Esophagus muscularis mucosa (tissue), 4 donors: ENCODE measurements at regions of chr4 and their contacts with region 1.

Region 1: DNA sequence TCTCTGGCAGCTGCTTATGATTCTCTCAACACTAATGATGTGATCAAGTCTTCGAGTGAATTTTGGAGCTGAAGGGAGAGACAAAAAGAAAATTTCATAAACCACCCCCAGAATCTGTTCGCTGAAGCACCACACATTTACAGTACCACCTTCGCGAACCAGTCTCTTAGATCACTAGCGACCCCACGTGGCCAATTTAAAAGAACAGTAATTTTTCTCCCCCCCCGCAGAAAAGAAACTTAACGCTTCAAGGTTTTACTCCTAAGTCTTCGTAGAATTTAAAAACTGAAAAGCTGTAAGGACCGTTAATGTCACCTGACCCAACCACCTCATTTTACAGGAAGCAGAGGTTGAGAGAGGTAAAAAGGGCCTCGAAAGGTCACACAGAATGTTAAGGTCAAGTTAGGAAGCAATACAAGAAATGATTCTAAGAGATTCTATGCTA is 187.5 kb downstream of the QDPR start:
- DNase-seq: no peak
- H3K4me3 ChIP-seq: no peak overlapping the region
- H3K27ac ChIP-seq: no peak overlapping the region
- H3K4me1 ChIP-seq: peaks cover 8 to 21% (median 14%) of the 10 kb centered on the region in 4 donors
- H3K27me3 ChIP-seq: no peaks in the 10 kb centered on the region
- CTCF ChIP-seq: peak; percentile 66 to 71 (median 68)
- EP300 ChIP-seq: no peak
- POLR2A ChIP-seq: no peak

Region 2: GRCh38 chr4:16289897-16290554 is 1034.4 kb before region 1 on chr4:
- intact Hi-C with region 1: loop called (anchors 5 kb)
- DNase-seq: no peak
- H3K4me3 ChIP-seq: no peak overlapping the region
- H3K27ac ChIP-seq: no peak overlapping the region
- H3K4me1 ChIP-seq: peaks cover 5 to 8% (median 7%) of the 10 kb centered on the region in 4 donors
- H3K27me3 ChIP-seq: peaks cover 0 to 14% (median 0%) of the 10 kb centered on the region in 4 donors
- CTCF ChIP-seq: peak; percentile 53 to 63 (median 61)
- EP300 ChIP-seq: no peak
- POLR2A ChIP-seq: no peak

Region 3: DNA sequence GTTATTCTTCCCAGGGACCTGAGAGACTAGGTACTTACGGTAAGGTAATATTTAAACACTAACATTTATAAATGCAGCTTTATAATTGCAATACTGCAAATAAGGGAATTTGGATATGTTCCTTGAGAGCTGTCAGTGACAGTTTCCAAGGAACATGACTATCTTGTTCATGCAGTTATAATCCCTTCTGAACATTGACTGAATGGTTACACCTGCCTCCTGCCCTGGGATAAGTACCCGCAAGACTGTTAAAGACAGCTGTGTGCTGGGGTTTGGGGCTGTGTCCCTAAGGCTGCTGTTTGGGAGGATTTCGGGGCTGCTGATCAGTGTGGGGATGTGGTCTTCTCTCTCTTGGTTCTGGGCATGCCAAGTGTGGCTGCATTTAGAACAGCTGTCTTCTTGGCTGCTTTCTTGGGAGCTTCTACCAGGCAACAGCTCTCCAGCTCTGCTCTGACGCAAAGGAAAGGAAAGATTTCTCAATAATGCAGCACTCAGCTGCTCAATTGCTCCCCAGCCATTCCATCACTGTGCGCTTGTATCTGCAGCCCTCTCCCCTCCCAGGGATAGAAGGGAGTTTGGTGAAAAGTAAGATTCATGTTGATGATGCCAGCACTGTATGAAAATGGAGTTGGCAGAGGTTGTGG is 799.4 kb before region 1 on chr4:
- intact Hi-C with region 1: loop called (anchors 10 kb)
- DNase-seq: no peak
- H3K4me3 ChIP-seq: no peak overlapping the region
- H3K27ac ChIP-seq: no peak overlapping the region
- H3K4me1 ChIP-seq: peaks cover 0 to 7% (median 2%) of the 10 kb centered on the region in 4 donors
- H3K27me3 ChIP-seq: no peaks in the 10 kb centered on the region
- CTCF ChIP-seq: no peak
- EP300 ChIP-seq: no peak
- POLR2A ChIP-seq: no peak

Region 4: GRCh38 chr4:16794816-16795445 is 529.5 kb before region 1 on chr4:
- intact Hi-C with region 1: loop called (anchors 10 kb)
- DNase-seq: no peak
- H3K4me3 ChIP-seq: no peak overlapping the region
- H3K27ac ChIP-seq: no peak overlapping the region
- H3K4me1 ChIP-seq: peaks cover 0 to 8% (median 2%) of the 10 kb centered on the region in 4 donors
- H3K27me3 ChIP-seq: no peaks in the 10 kb centered on the region
- CTCF ChIP-seq: peak; percentile 41 to 63 (median 52)
- EP300 ChIP-seq: no peak
- POLR2A ChIP-seq: no peak

Region 5: DNA sequence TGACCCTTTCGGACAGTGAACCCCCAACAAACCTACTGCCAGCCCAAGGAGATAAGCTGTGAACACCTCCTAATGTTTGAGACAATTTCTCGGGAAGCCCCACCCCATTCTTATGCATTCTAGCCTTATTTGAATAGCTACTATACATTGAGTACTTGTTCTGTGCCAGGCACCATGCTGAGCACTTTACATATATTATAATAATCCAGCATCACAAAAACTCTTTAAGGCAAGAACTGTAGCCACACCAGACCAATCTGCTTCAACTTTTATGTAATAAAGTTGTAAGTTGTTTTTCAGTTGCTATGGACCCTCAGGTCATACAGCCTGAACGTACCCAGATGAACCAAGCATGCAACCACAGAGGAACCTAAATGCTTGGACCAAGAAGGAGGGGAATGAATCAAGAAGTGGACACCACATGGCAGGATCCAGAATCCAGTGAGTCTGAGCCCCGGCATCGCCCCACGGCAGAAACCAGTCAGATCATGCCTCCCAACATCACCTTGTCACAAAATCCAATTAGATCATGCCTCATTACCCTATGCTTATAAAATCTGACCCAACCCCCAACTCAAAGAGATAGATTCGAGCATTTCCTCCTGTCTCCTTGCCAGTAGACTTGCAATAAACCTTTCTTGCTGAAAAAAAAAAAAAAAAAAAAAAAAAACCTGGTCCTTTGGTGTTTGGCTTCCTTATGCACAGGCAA is 37.5 kb before region 1 on chr4:
- intact Hi-C with region 1: no loop called
- DNase-seq: no peak
- H3K4me3 ChIP-seq: no peak overlapping the region
- H3K27ac ChIP-seq: no peak overlapping the region
- H3K4me1 ChIP-seq: peaks cover 4 to 11% (median 5%) of the 10 kb centered on the region in 4 donors
- H3K27me3 ChIP-seq: no peaks in the 10 kb centered on the region
- CTCF ChIP-seq: no peak
- EP300 ChIP-seq: no peak
- POLR2A ChIP-seq: no peak